MCF 10A (cell line): ENCODE measurements at regions of chr1 and their contacts with region 1.

Region 1: DNA sequence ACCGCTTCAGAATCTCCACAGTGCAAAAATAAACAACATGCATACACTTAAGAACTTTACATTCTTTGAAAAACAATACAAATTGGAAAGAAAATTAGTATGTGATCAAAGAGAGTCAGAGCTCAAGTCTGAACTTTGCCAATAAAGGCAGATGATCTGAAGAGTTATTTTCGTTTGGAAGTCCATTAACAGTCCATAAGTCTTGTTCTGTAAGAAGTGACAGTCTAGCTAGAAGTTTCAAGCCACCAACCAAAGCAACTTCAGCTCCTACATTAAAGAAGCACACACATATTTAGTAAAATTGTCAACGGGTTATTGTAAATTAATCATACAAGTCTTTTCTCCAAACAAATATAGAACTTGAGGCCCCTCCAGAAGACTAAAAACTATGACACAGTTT is 20.7 kb downstream of the ANGEL2 start:
- DNase-seq: no peak
- H3K4me3 Mint-ChIP-seq: no peak overlapping the region
- H3K27ac Mint-ChIP-seq: no peak overlapping the region
- H3K4me1 Mint-ChIP-seq: no peaks in the 10 kb centered on the region
- H3K27me3 Mint-ChIP-seq: no peaks in the 10 kb centered on the region
- CTCF ChIP-seq: no peak

Region 2: DNA sequence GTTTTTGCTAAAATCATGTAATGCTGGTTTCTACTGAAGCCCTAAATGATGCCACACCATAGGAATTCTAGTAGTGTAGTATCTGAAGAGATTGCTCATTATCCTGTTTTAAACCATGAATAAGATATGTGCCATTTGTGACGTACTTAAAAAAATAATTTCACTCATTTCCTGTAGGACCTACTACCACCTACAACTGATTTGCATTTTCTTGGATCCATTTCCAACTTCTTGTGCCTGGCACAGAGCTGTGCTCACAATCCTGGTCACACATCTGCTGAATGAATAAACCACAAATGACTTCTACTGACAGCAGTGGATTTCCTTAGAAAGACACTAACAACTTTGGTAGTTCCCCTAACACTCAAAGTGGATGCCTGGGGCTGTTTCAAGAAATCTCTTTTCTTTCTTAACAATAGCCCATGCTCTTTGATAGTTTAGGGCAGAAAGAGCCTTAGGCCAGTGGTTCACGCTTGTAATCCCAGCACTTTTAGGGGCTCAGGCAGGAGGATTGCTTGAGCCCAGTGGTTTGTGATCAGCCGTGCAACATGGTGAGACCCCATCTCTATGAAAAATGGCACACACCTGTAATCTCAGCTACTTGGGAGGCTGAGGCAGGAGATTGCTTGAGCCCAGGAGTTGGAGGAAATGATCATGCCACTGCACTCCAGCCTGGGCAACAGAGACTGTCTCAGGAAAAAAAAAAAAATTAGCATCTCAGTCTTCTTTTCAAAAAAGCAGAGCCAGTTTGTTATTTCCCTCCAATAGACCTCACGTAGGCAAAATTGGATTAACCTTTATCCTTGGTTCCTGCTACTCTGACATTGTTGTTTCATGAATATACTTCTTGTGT is 282.2 kb before region 1 on chr1:
- CTCF ChIA-PET with region 1: no interaction called
- POLR2A ChIA-PET with region 1: no interaction called
- intact Hi-C with region 1: no loop called
- DNase-seq: no peak
- H3K4me3 Mint-ChIP-seq: no peak overlapping the region
- H3K27ac Mint-ChIP-seq: no peak overlapping the region
- H3K4me1 Mint-ChIP-seq: no peaks in the 10 kb centered on the region
- H3K27me3 Mint-ChIP-seq: peaks cover 26% of the 10 kb centered on the region
- CTCF ChIP-seq: no peak

Region 3: DNA sequence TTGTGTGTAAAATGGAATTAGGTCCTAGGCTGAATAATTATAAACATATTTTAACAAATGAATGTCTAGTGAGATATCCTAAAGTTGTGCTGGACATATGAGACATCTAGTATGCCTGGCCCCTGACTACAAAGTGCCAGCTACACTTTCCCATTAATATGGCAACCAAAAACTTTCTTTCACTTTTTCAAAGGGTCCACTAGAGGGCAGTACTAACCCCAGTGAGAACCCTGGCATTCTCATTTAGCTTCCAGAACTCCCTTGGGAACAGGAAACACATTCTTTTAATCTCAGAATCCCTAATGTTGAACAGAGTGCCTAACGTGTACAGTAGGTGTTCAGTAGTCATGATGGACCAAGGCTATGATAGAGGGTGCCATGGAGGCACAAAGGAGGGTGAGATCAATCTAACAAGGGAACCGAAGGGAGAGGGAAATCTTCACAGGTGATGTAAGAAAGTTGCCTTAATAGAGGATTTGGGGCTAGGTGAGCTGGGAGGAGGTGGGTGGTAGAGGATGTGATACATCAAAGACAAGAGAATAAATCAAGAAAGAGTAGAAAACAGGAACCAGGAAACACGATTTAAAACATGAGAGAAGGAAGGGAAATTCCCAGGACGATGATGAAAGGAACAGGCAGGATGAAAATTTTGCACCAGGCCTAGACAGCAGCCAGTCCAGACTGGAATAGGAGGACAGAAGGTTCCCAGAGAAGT is 244.9 kb before region 1 on chr1:
- CTCF ChIA-PET with region 1: interaction called, 25 read pairs
- POLR2A ChIA-PET with region 1: interaction called, 3 read pairs
- intact Hi-C with region 1: loop called (anchors 1 kb)
- DNase-seq: peak; percentile 90
- H3K4me3 Mint-ChIP-seq: peak overlapping the region; percentile 7
- H3K27ac Mint-ChIP-seq: peak overlapping the region; percentile 46
- H3K4me1 Mint-ChIP-seq: peaks cover 19% of the 10 kb centered on the region
- H3K27me3 Mint-ChIP-seq: no peaks in the 10 kb centered on the region
- CTCF ChIP-seq: peak; percentile 96

Region 4: GRCh38 chr1:212814537-212815334 is 180.2 kb before region 1 on chr1:
- CTCF ChIA-PET with region 1: interaction called, 73 read pairs
- POLR2A ChIA-PET with region 1: interaction called, 7 read pairs
- intact Hi-C with region 1: loop called (anchors 1 kb)
- DNase-seq: peak; percentile 57
- H3K4me3 Mint-ChIP-seq: no peak overlapping the region
- H3K27ac Mint-ChIP-seq: no peak overlapping the region
- H3K4me1 Mint-ChIP-seq: peaks cover 4% of the 10 kb centered on the region
- H3K27me3 Mint-ChIP-seq: no peaks in the 10 kb centered on the region
- CTCF ChIP-seq: peak; percentile 52

Region 5: DNA sequence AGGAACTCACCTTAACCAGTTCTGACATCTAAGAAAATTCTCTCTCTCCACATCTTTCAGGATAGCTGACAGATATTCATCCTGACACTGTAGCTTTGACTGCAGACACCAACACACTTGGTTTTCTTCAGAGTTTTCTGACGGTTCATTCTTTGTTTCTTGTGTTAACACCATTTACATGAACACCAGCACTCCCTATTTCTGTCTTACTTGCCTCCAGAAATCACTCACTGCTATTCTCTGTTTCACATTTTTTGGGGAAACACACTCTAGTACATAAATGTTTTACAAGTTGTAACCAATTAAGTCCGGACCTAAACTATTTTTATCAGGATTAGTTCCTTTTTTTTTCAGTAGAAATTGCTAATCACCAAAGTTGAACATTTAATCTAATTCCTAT is 121.4 kb before region 1 on chr1:
- CTCF ChIA-PET with region 1: interaction called, 21 read pairs
- POLR2A ChIA-PET with region 1: interaction called, 4 read pairs
- intact Hi-C with region 1: no loop called
- DNase-seq: no peak
- H3K4me3 Mint-ChIP-seq: no peak overlapping the region
- H3K27ac Mint-ChIP-seq: peak overlapping the region; percentile 7
- H3K4me1 Mint-ChIP-seq: peaks cover 17% of the 10 kb centered on the region
- H3K27me3 Mint-ChIP-seq: no peaks in the 10 kb centered on the region
- CTCF ChIP-seq: no peak

Region 6: DNA sequence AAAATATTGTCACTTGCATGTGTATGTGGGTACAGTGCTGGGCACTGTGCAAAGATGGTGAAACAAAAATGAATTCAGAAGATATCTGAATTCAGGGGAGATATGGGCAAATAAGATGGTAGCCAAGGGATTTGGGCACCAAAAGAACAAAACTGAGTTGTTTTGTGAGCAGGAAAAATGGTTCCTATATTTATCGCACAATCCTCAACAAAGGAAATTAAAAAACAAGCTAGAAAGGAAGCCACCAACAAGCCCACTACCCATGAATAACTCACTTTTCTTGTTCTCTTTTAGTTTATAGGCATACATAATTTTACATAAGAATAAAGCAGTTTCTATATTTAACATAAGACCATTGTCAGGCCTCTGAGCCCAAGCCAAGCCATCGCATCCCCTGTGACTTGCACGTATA is 85.3 kb before region 1 on chr1:
- CTCF ChIA-PET with region 1: no interaction called
- POLR2A ChIA-PET with region 1: no interaction called
- intact Hi-C with region 1: no loop called
- DNase-seq: no peak
- H3K4me3 Mint-ChIP-seq: no peak overlapping the region
- H3K27ac Mint-ChIP-seq: no peak overlapping the region
- H3K4me1 Mint-ChIP-seq: no peaks in the 10 kb centered on the region
- H3K27me3 Mint-ChIP-seq: no peaks in the 10 kb centered on the region
- CTCF ChIP-seq: no peak

Region 7: DNA sequence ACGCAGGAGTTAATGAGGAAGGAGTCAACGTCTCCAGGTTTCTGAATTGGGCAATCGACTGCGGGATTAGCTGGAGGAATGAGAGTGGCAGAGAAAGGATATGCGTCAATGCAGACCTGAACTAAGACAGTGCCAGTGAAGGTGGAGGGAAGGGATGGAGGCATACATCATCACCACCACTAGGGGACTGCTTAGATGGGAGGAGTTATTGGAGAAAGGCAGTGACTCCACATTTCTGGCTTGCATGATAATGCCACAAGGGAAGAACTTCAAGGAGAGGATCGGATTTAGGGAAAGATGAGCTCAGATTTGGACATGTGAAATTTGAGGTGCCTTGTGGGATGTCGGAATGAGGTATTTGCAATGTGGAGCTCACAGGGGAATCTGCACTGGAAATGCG is 27.1 kb before region 1 on chr1:
- CTCF ChIA-PET with region 1: interaction called, 39 read pairs
- POLR2A ChIA-PET with region 1: interaction called, 8 read pairs
- intact Hi-C with region 1: no loop called
- DNase-seq: peak; percentile 89
- H3K4me3 Mint-ChIP-seq: no peak overlapping the region
- H3K27ac Mint-ChIP-seq: no peak overlapping the region
- H3K4me1 Mint-ChIP-seq: no peaks in the 10 kb centered on the region
- H3K27me3 Mint-ChIP-seq: peaks cover 45% of the 10 kb centered on the region
- CTCF ChIP-seq: peak; percentile 54